HepG2 (cell line): ENCODE measurements at regions of chr11 and their contacts with region 1.

Region 1: GRCh38 chr11:99452076-99452475 is 431.3 kb downstream of the CNTN5 start:
- DNase-seq: no peak
- ATAC-seq: no peak
- H3K4me3 ChIP-seq: no peak overlapping the region
- H3K27ac ChIP-seq: no peak overlapping the region
- H3K4me1 ChIP-seq: no peaks in the 10 kb centered on the region
- H3K27me3 ChIP-seq: no peaks in the 10 kb centered on the region
- CTCF ChIP-seq: no peak
- EP300 ChIP-seq: no peak
- POLR2A ChIP-seq: no peak
- RAD21 ChIP-seq: no peak

Region 2: GRCh38 chr11:99316776-99317520 is 135.1 kb before region 1 on chr11:
- CTCF ChIA-PET with region 1: no interaction called
- POLR2A ChIA-PET with region 1: no interaction called
- in situ Hi-C with region 1: no loop called
- intact Hi-C with region 1: no loop called
- DNase-seq: no peak
- ATAC-seq: no peak
- H3K4me3 ChIP-seq: no peak overlapping the region
- H3K27ac ChIP-seq: no peak overlapping the region
- H3K4me1 ChIP-seq: no peaks in the 10 kb centered on the region
- H3K27me3 ChIP-seq: no peaks in the 10 kb centered on the region; a peak in 1 of 5 replicates
- CTCF ChIP-seq: no peak
- EP300 ChIP-seq: no peak
- POLR2A ChIP-seq: no peak
- RAD21 ChIP-seq: no peak

Region 3: GRCh38 chr11:99383648-99384245 is 68.3 kb before region 1 on chr11:
- CTCF ChIA-PET with region 1: no interaction called
- POLR2A ChIA-PET with region 1: no interaction called
- in situ Hi-C with region 1: no loop called
- intact Hi-C with region 1: loop called (anchors 5 kb)
- DNase-seq: no peak
- ATAC-seq: no peak
- H3K4me3 ChIP-seq: no peak overlapping the region
- H3K27ac ChIP-seq: no peak overlapping the region
- H3K4me1 ChIP-seq: no peaks in the 10 kb centered on the region
- H3K27me3 ChIP-seq: no peaks in the 10 kb centered on the region
- CTCF ChIP-seq: no peak
- EP300 ChIP-seq: no peak
- POLR2A ChIP-seq: no peak
- RAD21 ChIP-seq: no peak